Panc1 (cell line): ENCODE measurements at regions of chr1 and their contacts with region 1.

Region 1: GRCh38 chr1:194289569-194290266 is 1103.3 kb upstream of the B3GALT2 start:
- DNase-seq: no peak
- ATAC-seq: no peak
- H3K4me3 ChIP-seq: no peak overlapping the region
- H3K27ac ChIP-seq: no peak overlapping the region
- H3K4me1 ChIP-seq: no peaks in the 10 kb centered on the region
- H3K27me3 ChIP-seq: no peaks in the 10 kb centered on the region
- CTCF ChIP-seq: no peak

Region 2: DNA sequence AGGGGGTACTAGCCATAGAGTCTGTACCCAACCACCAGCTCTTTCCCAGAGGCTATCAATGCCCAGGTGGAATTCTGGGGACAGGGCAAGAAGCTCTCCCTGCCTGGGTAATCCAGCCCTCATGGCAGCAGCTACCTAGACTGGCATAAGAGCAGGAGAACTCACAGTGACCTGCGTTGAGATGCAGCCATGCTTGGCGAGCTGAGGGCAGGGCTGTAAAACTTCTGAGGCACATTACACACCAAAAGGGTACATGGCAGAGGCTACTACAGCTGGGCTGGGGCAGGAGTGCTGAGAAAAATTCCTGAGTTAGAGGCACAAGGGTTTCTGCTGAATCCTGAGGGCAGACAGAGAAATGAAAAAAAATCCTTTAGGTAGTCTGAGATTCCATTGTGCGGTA is 175.4 kb before region 1 on chr1:
- CTCF ChIA-PET with region 1: interaction called, 12 read pairs
- POLR2A ChIA-PET with region 1: no interaction called
- in situ Hi-C with region 1: no loop called
- intact Hi-C with region 1: no loop called
- DNase-seq: no peak
- ATAC-seq: no peak
- H3K4me3 ChIP-seq: no peak overlapping the region
- H3K27ac ChIP-seq: no peak overlapping the region
- H3K4me1 ChIP-seq: no peaks in the 10 kb centered on the region
- H3K27me3 ChIP-seq: no peaks in the 10 kb centered on the region
- CTCF ChIP-seq: no peak

Region 3: GRCh38 chr1:194300340-194300739 is 10.6 kb after region 1 on chr1:
- CTCF ChIA-PET with region 1: no interaction called
- POLR2A ChIA-PET with region 1: no interaction called
- in situ Hi-C with region 1: no loop called
- intact Hi-C with region 1: no loop called
- DNase-seq: no peak
- ATAC-seq: no peak
- H3K4me3 ChIP-seq: no peak overlapping the region
- H3K27ac ChIP-seq: no peak overlapping the region
- H3K4me1 ChIP-seq: no peaks in the 10 kb centered on the region
- H3K27me3 ChIP-seq: no peaks in the 10 kb centered on the region
- CTCF ChIP-seq: no peak